Activated naive CD8-positive, alpha-beta T cell treated with anti-CD3 and anti-CD28 coated beads, Interleukin-2, amount 10 ng/mL, durations not matched to agents 7 days and 5 days (primary cell): ENCODE measurements at regions of chr2 and their contacts with region 1.

Region 1: DNA sequence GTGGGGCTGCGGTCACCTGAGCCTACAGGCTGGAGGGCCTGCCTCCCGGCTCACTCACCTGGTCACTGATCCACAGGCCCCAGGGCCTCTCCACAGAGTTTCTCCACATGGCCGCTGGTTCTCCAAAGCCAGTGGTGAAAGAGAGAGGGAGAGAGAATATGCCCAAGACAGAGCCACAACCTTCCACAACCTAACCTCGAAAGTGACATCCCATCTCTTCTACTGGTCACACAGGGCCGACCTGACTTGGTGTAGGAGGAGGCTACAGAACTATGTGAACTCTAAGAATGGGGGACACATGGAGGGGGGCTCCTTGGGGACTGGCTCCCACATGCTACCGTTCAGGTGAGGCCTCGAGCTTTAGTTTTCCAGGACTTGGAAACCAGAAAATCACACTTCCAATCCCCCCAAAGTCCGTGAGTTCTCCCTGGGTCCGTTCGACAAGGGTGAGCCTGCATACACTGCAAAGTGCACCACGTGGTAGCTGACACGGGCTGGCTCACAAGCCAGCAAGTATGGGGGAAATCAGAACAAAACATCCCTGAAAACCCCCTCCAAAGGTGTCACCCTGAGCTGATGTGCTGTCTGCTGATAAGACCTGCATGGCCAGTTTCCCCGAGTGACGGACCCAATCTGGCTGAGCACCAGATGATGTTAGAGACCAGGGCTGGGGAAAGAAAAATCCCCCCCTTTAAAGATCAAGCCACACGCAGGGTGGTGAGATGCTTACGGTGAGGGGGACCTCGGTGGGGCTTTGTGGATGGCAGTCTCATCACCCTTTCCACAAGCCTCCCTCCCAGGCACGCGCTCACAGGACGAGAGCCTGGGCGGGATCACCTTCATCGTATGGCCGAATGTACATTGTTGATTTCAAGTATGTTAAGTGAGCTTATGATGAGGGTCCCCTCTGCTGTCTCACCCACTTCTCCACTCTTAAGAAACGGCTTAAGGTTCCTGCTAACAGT is 54.2 kb upstream of the SEMA4C start:
- DNase-seq: peak; percentile 60
- ATAC-seq: peak; percentile 66
- H3K4me3 Mint-ChIP-seq: peak overlapping the region; percentile 77
- H3K27ac Mint-ChIP-seq: peak overlapping the region; percentile 93
- H3K4me1 Mint-ChIP-seq: peaks cover 26% of the 10 kb centered on the region
- H3K27me3 Mint-ChIP-seq: peaks cover 2% of the 10 kb centered on the region

Region 2: GRCh38 chr2:96868555-96869280 is 55.4 kb before region 1 on chr2:
- POLR2A ChIA-PET with region 1: interaction called, 11 read pairs
- DNase-seq: peak; percentile 77
- ATAC-seq: peak; percentile 58
- H3K4me3 Mint-ChIP-seq: peak overlapping the region; percentile 85
- H3K27ac Mint-ChIP-seq: peak overlapping the region; percentile 81
- H3K4me1 Mint-ChIP-seq: peaks cover 29% of the 10 kb centered on the region
- H3K27me3 Mint-ChIP-seq: peaks cover 1% of the 10 kb centered on the region

Region 3: DNA sequence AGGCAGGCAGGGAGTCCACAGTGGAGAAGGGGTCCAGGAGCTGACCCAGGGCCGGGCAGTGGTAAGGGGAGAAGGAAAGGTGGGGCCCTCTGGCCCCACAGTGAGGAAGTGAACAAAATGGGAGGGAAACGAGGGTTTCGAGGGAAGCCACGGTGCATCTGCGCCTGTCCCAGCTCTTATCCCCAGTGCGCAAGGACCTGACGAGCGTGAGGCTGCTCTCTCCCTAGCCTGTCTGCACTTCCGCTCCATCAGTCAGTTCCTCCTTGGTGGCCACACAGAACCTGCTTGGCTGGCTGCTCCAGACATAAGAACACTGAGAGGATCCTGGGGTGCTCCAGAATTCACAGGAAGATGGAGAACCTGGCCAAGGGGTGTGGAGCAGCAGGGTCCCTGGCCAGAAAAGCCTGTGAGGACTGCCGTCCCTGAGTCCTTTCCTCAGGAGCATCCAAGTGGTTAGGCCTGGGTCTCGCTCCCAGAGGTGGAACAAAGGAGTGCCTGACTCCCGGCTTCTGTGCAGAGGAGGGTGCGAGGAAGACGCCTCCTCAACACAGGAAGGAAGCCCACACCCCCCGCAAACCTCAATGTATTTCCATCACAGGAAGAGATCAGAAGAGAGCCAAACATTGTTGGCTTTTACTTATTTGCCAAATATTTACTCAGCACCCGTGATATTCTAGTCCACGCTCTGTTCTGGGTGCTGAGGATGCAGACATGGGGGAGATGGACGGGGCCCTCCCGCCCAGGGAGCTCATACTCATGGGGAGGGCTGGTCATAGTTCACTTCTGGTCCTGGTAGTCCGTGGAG is 10.5 kb before region 1 on chr2:
- POLR2A ChIA-PET with region 1: interaction called, 17 read pairs
- DNase-seq: peak; percentile 67
- ATAC-seq: peak; percentile 86
- H3K4me3 Mint-ChIP-seq: peak overlapping the region; percentile 84
- H3K27ac Mint-ChIP-seq: peak overlapping the region; percentile 96
- H3K4me1 Mint-ChIP-seq: peaks cover 26% of the 10 kb centered on the region
- H3K27me3 Mint-ChIP-seq: peaks cover 4% of the 10 kb centered on the region

Region 4: GRCh38 chr2:96937586-96937985 is 13.5 kb after region 1 on chr2:
- POLR2A ChIA-PET with region 1: interaction called, 10 read pairs
- DNase-seq: no peak
- ATAC-seq: no peak
- H3K4me3 Mint-ChIP-seq: no peak overlapping the region
- H3K27ac Mint-ChIP-seq: no peak overlapping the region
- H3K4me1 Mint-ChIP-seq: peaks cover 21% of the 10 kb centered on the region
- H3K27me3 Mint-ChIP-seq: peaks cover 1% of the 10 kb centered on the region

Region 5: DNA sequence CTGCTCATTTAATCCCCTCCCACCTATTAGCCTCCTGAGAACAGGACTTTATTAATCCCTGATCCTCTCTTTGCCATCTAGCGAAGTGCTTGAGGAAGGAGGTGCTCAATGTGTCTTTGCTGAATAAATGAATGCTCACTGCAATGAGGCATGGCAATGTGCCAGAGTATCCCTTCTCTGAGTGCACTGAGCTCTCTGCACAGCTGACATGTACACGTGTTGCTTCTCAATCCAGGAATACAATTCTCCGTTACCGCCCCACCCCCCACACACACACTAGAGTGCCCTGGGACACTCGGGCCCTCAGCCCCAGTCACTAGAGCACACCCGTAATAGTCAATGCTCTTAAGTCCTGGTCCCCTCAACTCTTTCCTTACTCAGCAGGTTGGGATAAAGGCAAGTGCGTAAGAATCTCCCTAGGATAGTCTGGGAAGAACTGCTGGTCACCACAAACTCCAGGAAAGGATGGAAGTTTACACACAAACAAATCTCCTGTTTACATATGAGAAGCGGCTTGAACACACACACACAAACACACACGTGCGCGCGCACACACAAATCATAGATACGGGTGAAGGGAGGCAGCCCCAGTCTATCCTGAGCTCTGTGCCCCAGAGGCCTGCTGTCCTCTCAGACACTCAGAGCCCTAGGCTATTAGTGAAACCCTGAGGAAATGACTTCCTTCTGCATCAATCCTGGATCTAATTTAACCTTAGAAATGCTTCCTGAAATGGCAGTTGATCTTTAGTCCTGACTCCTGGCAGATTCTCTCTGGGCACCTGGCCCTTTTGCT is 21.1 kb after region 1 on chr2:
- POLR2A ChIA-PET with region 1: interaction called, 11 read pairs
- DNase-seq: no peak
- ATAC-seq: no peak
- H3K4me3 Mint-ChIP-seq: no peak overlapping the region
- H3K27ac Mint-ChIP-seq: peak overlapping the region; percentile 43
- H3K4me1 Mint-ChIP-seq: peaks cover 24% of the 10 kb centered on the region
- H3K27me3 Mint-ChIP-seq: peaks cover 3% of the 10 kb centered on the region

Region 6: DNA sequence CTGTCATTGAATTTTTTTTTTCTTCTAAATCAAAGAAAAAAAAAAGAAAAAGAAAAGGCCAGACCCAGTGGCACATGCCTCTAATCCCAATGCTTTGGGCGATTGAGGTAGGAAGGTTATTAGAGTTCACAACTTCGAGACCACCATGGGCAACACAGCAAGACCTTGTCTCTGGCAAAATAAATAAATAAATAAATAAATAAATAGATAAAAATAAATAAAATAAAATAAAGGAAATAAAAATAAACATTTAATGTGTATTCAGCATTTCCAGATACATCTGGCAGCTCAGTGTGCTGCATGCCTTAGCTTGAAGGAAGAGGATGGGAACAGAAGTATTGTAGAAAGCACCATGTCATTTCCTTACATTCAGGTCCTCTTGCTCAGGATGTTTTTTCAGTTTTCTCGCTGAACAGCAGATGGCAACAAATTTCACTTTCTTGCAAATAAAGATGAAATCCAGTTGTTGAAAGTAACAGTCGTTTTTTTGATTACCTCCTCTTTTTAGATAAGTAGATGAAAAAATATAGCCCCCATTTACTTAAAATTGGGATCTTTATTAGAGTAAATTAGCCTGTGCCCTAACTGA is 88.0 kb after region 1 on chr2:
- POLR2A ChIA-PET with region 1: no interaction called
- DNase-seq: no peak
- ATAC-seq: peak; percentile 54
- H3K4me3 Mint-ChIP-seq: no peak overlapping the region
- H3K27ac Mint-ChIP-seq: no peak overlapping the region
- H3K4me1 Mint-ChIP-seq: peaks cover 4% of the 10 kb centered on the region
- H3K27me3 Mint-ChIP-seq: peaks cover 57% of the 10 kb centered on the region